ENCODE measurements at regions of chr12 and their contacts with region 1.

Region 1: GRCh38 chr12:810671-811415 is 58.5 kb downstream of the WNK1 start:
- DNase-seq: peak; percentile 86
- H3K4me3 Mint-ChIP-seq: peak overlapping the region; percentile 8
- H3K27ac Mint-ChIP-seq: peak overlapping the region; percentile 15
- H3K4me1 Mint-ChIP-seq: peaks cover 70% of the 10 kb centered on the region
- H3K27me3 Mint-ChIP-seq: no peaks in the 10 kb centered on the region

Region 2: DNA sequence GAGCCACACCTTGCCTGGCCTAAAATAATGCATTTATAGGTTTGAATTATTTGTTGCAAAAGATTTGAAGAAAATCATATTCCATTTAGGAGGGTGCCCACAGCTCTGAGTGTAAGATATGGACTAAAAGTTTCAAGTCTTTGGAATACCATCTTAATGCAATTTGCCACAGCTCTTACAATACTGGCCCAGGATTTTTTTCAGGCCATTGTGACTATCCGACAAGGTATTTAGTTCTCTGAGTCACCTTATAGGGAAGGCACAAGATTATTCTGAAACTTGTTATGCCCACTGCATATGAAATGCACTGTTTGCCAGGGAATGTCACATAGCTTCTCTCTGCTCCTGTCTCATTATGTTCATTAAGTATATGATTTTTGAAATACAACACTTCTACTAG is 518.7 kb before region 1 on chr12:
- CTCF ChIA-PET with region 1: no interaction called
- POLR2A ChIA-PET with region 1: no interaction called
- intact Hi-C with region 1: no loop called
- DNase-seq: no peak
- H3K4me3 Mint-ChIP-seq: no peak overlapping the region
- H3K27ac Mint-ChIP-seq: peak overlapping the region; percentile 14
- H3K4me1 Mint-ChIP-seq: peaks cover 34% of the 10 kb centered on the region
- H3K27me3 Mint-ChIP-seq: no peaks in the 10 kb centered on the region

Region 3: DNA sequence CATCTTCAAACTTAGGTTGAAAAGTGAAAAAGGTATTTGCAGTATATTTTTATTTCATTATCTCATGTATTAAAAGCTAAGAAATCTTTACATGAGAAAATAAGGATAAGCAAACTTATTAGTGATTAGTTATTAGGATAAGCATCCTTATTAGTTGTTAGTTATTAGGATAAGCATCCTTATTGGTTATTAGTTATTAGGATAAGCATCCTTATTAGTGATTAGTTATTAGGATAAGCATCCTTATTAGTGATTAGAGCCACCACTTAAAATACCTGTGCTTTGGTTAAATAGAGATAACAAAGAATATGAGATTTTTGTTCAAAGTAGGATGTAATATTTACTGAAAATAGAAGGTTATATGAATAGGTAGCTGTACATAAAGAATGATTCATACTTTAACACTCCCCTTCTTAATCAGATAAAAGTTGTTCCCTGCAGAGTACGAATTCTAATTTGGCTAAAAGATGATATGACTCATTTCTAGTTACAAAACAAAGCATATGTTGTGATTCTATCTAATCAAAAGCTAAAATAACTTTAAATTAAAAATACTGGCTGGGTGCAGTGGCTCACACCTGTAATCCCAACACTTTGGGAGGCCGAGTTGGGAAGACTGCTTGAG is 478.1 kb before region 1 on chr12:
- CTCF ChIA-PET with region 1: no interaction called
- POLR2A ChIA-PET with region 1: no interaction called
- intact Hi-C with region 1: no loop called
- DNase-seq: no peak
- H3K4me3 Mint-ChIP-seq: no peak overlapping the region
- H3K27ac Mint-ChIP-seq: no peak overlapping the region
- H3K4me1 Mint-ChIP-seq: peaks cover 22% of the 10 kb centered on the region
- H3K27me3 Mint-ChIP-seq: no peaks in the 10 kb centered on the region

Region 4: DNA sequence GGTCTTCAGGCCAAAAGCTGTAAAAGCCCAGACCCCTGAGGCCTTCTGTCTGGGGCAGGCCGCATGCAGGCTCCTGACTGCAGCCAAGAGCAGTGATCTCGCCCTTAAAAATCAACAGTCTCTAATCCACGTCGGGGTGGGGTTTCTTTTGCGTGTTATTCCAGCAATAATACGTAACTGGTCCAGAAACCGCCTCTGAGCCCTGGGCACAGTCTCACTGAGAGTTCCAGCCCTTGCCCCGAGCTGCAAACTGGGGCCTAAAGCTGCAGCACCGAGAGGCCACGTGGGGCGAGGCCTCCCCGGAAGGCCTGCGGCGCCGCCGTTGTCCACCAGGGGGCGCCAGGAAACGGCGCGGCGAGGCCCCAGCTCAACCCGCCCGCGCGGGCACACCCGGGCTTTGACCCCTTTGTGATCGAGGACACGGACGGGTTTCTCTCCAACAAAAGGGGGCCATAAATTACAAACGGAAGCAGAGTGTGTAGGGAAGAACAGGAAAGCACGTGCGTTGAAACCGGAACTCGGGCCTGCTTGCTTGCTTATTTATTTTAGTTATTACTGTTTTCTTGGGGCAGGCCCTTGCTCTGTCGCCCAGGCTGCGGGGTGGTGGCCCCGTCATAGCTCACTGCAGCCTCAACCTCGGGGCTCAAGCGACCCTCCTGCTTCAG is 234.8 kb before region 1 on chr12:
- CTCF ChIA-PET with region 1: interaction called, 103 read pairs
- POLR2A ChIA-PET with region 1: no interaction called
- intact Hi-C with region 1: loop called (anchors 2 kb)
- DNase-seq: peak; percentile 88
- H3K4me3 Mint-ChIP-seq: peak overlapping the region; percentile 51
- H3K27ac Mint-ChIP-seq: peak overlapping the region; percentile 45
- H3K4me1 Mint-ChIP-seq: peaks cover 34% of the 10 kb centered on the region
- H3K27me3 Mint-ChIP-seq: no peaks in the 10 kb centered on the region

Region 5: DNA sequence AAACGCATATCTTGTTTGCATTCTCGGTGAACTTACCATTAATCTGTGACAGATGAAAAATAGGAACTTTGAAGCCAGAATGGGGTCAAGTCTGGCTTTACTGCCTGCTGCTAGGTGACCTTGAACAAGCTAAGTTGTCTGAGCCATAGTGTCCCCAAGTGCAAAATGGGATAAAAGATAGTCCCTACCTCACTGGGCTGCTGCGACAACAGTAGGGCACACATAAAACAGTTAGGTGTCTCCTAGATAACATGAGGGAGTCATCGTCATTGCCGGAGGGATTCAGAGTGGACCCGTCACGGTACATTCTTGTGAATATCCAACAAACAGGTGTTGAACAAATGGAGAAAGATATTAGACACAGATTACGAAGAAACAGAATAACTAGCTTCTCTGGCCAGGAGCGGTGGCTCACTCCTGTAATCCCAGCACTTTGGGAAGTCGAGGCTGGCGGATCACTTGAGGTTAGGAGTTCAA is 218.8 kb before region 1 on chr12:
- CTCF ChIA-PET with region 1: no interaction called
- POLR2A ChIA-PET with region 1: no interaction called
- intact Hi-C with region 1: no loop called
- DNase-seq: no peak
- H3K4me3 Mint-ChIP-seq: no peak overlapping the region
- H3K27ac Mint-ChIP-seq: no peak overlapping the region
- H3K4me1 Mint-ChIP-seq: peaks cover 3% of the 10 kb centered on the region
- H3K27me3 Mint-ChIP-seq: no peaks in the 10 kb centered on the region

Region 6: GRCh38 chr12:674272-674781 is 136.5 kb before region 1 on chr12:
- CTCF ChIA-PET with region 1: interaction called, 5 read pairs
- POLR2A ChIA-PET with region 1: interaction called, 3 read pairs
- intact Hi-C with region 1: loop called (anchors 2 kb)
- DNase-seq: peak; percentile 90
- H3K4me3 Mint-ChIP-seq: peak overlapping the region; percentile 70
- H3K27ac Mint-ChIP-seq: peak overlapping the region; percentile 85
- H3K4me1 Mint-ChIP-seq: peaks cover 65% of the 10 kb centered on the region
- H3K27me3 Mint-ChIP-seq: peaks cover 8% of the 10 kb centered on the region

Region 7: GRCh38 chr12:779745-780734 is 30.8 kb before region 1 on chr12:
- CTCF ChIA-PET with region 1: interaction called, 16 read pairs
- POLR2A ChIA-PET with region 1: no interaction called
- intact Hi-C with region 1: loop called (anchors 1 kb)
- DNase-seq: no peak
- H3K4me3 Mint-ChIP-seq: peak overlapping the region; percentile 62
- H3K27ac Mint-ChIP-seq: peak overlapping the region; percentile 47
- H3K4me1 Mint-ChIP-seq: peaks cover 72% of the 10 kb centered on the region
- H3K27me3 Mint-ChIP-seq: no peaks in the 10 kb centered on the region

Region 8: DNA sequence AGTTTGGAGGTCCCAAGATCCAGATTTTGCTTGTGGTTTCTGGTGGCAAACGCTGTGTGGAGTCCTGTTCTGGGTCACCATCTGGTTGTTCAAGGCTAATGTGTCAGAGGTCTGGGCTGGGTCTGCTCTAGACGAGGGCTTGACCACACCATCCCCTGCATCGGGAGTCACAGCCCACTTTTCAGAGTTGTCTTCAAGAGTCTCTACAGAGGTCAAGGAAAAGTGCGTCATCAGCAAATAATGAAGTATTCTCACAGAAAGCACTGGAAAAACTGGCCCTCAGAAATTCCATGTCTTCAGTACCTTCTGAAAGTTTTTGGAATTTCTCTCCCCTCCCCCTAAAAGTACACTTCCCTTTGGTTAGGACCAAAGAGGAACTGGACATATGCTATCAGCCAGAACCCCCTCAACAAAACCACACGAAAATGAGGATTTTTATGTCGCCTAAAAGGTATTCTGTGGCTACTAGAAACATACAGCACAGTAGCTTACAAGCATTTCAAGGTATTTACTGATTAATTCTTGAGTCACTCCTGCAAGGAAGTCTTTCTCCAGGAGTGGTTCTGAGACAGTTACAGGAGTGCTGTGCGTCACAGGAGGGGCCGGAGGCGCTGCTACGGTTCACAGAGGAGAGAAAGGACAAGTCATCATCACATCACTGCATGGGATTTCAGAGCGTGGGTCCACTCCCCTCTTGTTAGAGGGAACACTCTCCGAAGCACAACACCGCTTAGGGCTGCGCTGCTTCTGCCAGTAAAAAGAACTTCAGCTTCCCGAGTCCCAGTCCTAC is 103.3 kb after region 1 on chr12:
- CTCF ChIA-PET with region 1: no interaction called
- POLR2A ChIA-PET with region 1: no interaction called
- intact Hi-C with region 1: no loop called
- DNase-seq: no peak
- H3K4me3 Mint-ChIP-seq: no peak overlapping the region
- H3K27ac Mint-ChIP-seq: peak overlapping the region; percentile 29
- H3K4me1 Mint-ChIP-seq: peaks cover 5% of the 10 kb centered on the region
- H3K27me3 Mint-ChIP-seq: no peaks in the 10 kb centered on the region

Region 9: GRCh38 chr12:1093166-1093751 is 282.4 kb after region 1 on chr12:
- CTCF ChIA-PET with region 1: interaction called, 12 read pairs
- POLR2A ChIA-PET with region 1: no interaction called
- intact Hi-C with region 1: loop called (anchors 10 kb)
- DNase-seq: peak; percentile 18
- H3K4me3 Mint-ChIP-seq: no peak overlapping the region
- H3K27ac Mint-ChIP-seq: no peak overlapping the region
- H3K4me1 Mint-ChIP-seq: peaks cover 11% of the 10 kb centered on the region
- H3K27me3 Mint-ChIP-seq: no peaks in the 10 kb centered on the region